ENCODE measurements at regions of chr12 and their contacts with region 1.

Region 1: DNA sequence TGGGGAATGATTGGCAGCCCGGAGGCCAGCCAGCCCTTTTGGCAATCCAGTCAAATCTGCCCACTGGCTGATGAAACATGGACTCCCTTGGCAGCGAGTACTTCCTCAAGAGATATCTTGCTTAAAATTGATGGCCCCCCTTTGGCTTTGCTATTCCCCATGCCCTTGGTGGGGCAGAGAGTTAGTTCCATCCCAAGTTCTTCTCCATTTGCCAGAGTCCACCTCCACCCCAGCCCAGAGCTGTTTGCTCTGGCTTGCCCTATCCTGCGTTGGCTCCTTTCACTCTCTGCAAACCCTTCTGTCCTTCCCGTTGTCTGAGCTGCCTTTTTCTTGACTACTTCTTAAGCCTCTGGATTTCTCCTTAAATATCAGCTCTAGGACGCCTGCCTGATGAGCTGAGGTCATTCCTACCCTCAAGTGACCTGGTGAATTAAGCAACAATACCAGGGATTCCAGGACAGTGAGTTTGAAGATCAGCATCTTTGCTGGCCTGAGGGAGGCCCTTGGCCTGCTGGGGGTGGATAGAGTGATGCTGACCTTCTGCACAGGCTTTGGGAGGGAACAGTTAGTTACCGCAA is 212.0 kb downstream of the CACNA1C start:
- DNase-seq: no peak
- ATAC-seq: peak in 1 of 2 experiments; percentile 24; a peak in 1 of 6 replicates
- H3K4me3 ChIP-seq: no peak overlapping the region
- H3K27ac ChIP-seq: no peak overlapping the region
- H3K4me1 ChIP-seq: no peaks in the 10 kb centered on the region
- CTCF ChIP-seq: no peak
- EP300 ChIP-seq: no peak
- POLR2A ChIP-seq: no peak
- RAD21 ChIP-seq: no peak

Region 2: GRCh38 chr12:2276288-2277033 is 11.7 kb after region 1 on chr12:
- CTCF ChIA-PET with region 1: interaction called, 10 read pairs
- POLR2A ChIA-PET with region 1: no interaction called
- DNase-seq: no peak
- ATAC-seq: no peak
- H3K4me3 ChIP-seq: no peak overlapping the region
- H3K27ac ChIP-seq: no peak overlapping the region
- H3K4me1 ChIP-seq: no peaks in the 10 kb centered on the region
- CTCF ChIP-seq: no peak
- EP300 ChIP-seq: no peak
- POLR2A ChIP-seq: no peak
- RAD21 ChIP-seq: no peak